ENCODE measurements at regions of chr12 and their contacts with region 1.

Region 1: DNA sequence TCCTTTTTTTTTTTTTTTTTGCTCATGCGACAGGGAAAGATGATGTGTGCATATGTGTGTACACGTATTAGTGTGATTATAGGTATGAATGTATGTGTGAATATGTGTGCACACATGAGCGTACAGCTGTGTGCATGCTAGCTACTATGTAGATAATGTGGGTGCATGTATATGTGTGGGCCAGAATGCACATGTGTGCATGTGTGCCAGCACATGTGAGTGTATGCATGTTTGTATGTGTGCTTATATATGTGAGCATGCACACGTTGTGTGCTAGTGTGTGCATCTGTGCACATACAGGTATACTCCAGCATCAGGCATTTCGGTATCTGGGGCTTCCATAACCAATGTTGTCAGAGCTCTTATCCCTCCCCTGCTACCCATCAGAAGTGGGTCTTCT is 541.1 kb downstream of the AACS start:
- DNase-seq: no peak
- ATAC-seq: no peak
- H3K4me3 ChIP-seq: no peak overlapping the region
- H3K27ac ChIP-seq: no peak overlapping the region
- H3K4me1 ChIP-seq: no peaks in the 10 kb centered on the region
- H3K27me3 ChIP-seq: no peaks in the 10 kb centered on the region
- CTCF ChIP-seq: no peak

Region 2: GRCh38 chr12:125240717-125241116 is 365.6 kb before region 1 on chr12:
- CTCF ChIA-PET with region 1: interaction called, 10 read pairs
- POLR2A ChIA-PET with region 1: no interaction called
- in situ Hi-C with region 1: no loop called
- intact Hi-C with region 1: no loop called
- DNase-seq: no peak
- ATAC-seq: no peak
- H3K4me3 ChIP-seq: no peak overlapping the region
- H3K27ac ChIP-seq: no peak overlapping the region
- H3K4me1 ChIP-seq: peaks cover 1% of the 10 kb centered on the region; the same call in 1 of the 2 replicates
- H3K27me3 ChIP-seq: peaks cover 6% of the 10 kb centered on the region
- CTCF ChIP-seq: no peak